A673 (cell line): ENCODE measurements at regions of chrX and their contacts with region 1.

Region 1: DNA sequence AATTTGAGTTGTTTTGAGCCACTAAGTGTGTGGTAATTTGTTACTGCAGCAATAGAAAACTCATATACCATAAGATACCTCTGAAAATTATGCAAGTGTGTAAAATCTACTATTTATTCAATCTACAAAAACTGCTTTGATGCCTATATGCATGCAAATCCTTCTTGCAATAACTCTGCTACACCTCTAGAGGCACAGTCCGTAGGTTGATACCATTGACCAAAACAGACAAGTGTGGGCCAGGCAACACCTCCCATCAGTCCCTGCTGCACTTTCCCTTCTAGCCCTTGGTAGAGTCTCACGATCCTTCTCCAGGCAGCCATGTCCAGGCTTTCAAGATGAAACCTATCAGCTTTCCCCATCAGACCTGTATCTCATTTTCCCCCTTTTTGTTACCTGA is 48.8 kb upstream of the FAM9A start:
- DNase-seq: no peak
- H3K4me3 ChIP-seq: no peak overlapping the region
- H3K27ac ChIP-seq: no peak overlapping the region
- H3K4me1 ChIP-seq: no peaks in the 10 kb centered on the region
- H3K27me3 ChIP-seq: no peaks in the 10 kb centered on the region
- CTCF ChIP-seq: peak; percentile 33; the same call in 1 of the 2 replicates

Region 2: GRCh38 chrX:8832582-8833378 is 17.2 kb before region 1 on chrX:
- CTCF ChIA-PET with region 1: no interaction called
- POLR2A ChIA-PET with region 1: no interaction called
- intact Hi-C with region 1: loop called (anchors 2 kb)
- DNase-seq: no peak
- H3K4me3 ChIP-seq: no peak overlapping the region
- H3K27ac ChIP-seq: no peak overlapping the region
- H3K4me1 ChIP-seq: no peaks in the 10 kb centered on the region
- H3K27me3 ChIP-seq: peaks cover 25% of the 10 kb centered on the region
- CTCF ChIP-seq: no peak

Region 3: DNA sequence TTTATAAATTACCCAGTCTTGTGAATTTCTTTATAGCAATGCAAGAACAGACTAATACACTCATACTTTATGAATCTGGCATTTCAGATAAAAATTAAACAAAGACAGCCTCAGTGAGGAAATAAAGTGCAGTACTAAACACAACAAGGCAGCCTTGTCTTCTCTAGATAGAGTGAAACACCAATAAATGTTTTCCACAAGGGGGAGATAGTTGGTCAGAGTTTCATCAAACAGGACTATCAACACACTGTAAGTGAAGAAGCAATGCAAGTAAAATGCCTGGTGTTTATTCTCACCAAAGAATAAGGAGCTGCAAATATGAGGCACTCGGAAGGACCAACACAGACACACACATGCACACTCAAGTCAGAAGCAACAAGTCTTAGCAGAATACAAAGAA is 121.2 kb after region 1 on chrX:
- CTCF ChIA-PET with region 1: no interaction called
- POLR2A ChIA-PET with region 1: no interaction called
- intact Hi-C with region 1: no loop called
- DNase-seq: peak; percentile 60
- H3K4me3 ChIP-seq: no peak overlapping the region
- H3K27ac ChIP-seq: no peak overlapping the region
- H3K4me1 ChIP-seq: no peaks in the 10 kb centered on the region
- H3K27me3 ChIP-seq: no peaks in the 10 kb centered on the region
- CTCF ChIP-seq: peak; percentile 52; the same call in 1 of the 2 replicates